CD8-positive, alpha-beta T cell (primary cell): ENCODE measurements at regions of chr2 and their contacts with region 1.

Region 1: DNA sequence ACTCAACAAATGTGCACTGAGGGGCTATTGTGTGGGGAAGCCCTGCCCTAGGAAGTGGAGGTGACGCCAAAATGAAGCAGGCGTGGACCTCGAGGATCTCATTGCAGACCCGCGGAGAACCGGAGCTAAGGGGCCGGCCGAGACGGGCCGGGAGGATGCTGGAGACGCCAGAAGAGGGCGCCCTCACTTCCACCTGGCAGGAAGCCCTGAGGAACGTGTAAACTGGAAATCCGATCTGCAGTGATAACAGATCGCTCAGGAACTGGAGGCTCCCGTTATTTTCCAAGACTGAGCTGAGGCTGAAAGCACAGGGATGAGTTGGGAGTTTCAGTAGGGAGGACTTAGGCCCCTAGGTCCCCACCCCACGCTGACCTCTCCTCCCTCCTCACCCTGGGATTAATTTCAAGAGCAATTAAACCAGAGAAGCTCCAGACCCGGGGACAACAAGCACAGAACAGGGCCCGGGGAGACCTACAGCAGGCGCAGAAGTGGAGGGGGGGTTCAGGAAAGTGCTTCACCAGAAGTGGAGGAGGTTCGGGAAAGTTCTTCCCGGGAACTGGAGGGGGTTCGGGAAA is 7.7 kb upstream of the COL6A3 start:
- DNase-seq: peak; percentile 56 to 91 (median 83)
- ATAC-seq: peak; percentile 88
- H3K4me3 ChIP-seq: peak overlapping the region in 1 of 2 experiments; percentile 21
- H3K4me3 Mint-ChIP-seq: peak overlapping the region; percentile 70
- H3K27ac ChIP-seq: no peak overlapping the region
- H3K27ac Mint-ChIP-seq: no peak overlapping the region
- H3K4me1 ChIP-seq: peaks cover 10% of the 10 kb centered on the region
- H3K4me1 Mint-ChIP-seq: peaks cover 34% of the 10 kb centered on the region
- H3K27me3 ChIP-seq: no peaks in the 10 kb centered on the region
- H3K27me3 Mint-ChIP-seq: no peaks in the 10 kb centered on the region
- CTCF ChIP-seq: peak; percentile 86

Region 2: DNA sequence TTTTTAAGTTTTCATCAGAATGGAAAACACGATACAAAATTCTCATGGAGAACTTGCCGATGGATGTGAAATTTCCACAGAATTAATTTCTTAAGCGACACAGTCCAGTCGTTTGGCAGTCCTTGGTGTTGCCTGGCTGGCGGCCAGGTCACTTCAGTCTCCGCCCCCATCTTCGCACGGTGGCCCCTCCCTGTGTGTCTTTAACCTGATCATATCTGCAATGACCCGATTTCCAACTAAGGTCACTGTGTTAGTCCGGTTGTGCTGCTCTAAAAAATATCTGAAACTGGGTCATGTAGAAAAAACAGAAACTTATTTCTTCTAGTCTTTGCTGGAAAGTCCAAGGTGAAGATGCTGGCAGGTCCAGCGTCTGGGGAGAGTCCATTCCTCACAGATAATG is 380.4 kb before region 1 on chr2:
- CTCF ChIA-PET with region 1: no interaction called
- POLR2A ChIA-PET with region 1: no interaction called
- intact Hi-C with region 1: no loop called
- DNase-seq: no peak
- ATAC-seq: no peak
- H3K4me3 ChIP-seq: no peak overlapping the region
- H3K4me3 Mint-ChIP-seq: no peak overlapping the region
- H3K27ac ChIP-seq: no peak overlapping the region
- H3K27ac Mint-ChIP-seq: no peak overlapping the region
- H3K4me1 ChIP-seq: no peaks in the 10 kb centered on the region
- H3K4me1 Mint-ChIP-seq: no peaks in the 10 kb centered on the region
- H3K27me3 ChIP-seq: no peaks in the 10 kb centered on the region
- H3K27me3 Mint-ChIP-seq: peaks cover 2% of the 10 kb centered on the region
- CTCF ChIP-seq: no peak

Region 3: DNA sequence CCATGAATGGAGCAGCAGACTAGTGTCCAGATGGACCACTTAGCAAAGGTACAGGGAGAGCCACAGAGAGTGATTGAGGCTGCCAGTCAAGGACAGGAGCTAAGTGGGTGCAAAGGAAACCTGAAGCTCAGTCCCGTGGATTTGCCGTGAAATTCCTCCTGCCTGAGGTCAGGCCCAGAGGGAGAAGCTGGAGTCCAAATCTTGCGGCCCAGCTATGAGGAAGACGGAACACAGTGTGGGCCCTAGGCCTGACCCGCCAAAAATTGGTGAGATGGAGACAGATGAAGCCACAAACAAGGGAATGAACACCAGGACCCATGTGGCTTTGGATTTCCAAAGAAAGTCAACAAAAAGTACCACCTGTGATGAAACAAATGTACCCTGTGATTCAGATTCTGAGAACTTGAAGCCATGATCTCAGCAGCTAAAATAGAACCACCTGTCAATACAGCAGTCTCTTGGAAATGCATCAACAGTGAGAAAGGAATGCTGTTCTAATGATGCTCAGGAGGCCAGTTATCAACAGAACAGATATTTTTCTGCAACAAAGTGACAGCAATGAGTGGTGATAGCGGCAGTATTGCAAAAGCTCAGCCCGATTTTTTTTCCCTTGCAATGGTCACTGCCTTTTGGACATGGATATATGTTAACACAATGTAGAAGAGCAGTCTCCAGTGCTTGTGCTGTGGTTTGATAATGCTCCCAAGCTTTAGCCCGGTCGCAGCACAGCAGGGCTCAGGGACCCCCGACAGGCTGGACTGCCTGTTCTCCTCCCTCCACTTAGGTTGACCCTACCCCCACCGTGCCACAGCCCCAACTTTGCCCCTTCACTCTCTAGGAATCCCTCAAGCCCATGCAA is 18.4 kb before region 1 on chr2:
- CTCF ChIA-PET with region 1: interaction called, 77 read pairs
- POLR2A ChIA-PET with region 1: no interaction called
- intact Hi-C with region 1: no loop called
- DNase-seq: no peak
- ATAC-seq: no peak
- H3K4me3 ChIP-seq: no peak overlapping the region
- H3K4me3 Mint-ChIP-seq: no peak overlapping the region
- H3K27ac ChIP-seq: no peak overlapping the region
- H3K27ac Mint-ChIP-seq: no peak overlapping the region
- H3K4me1 ChIP-seq: no peaks in the 10 kb centered on the region
- H3K4me1 Mint-ChIP-seq: no peaks in the 10 kb centered on the region
- H3K27me3 ChIP-seq: no peaks in the 10 kb centered on the region
- H3K27me3 Mint-ChIP-seq: no peaks in the 10 kb centered on the region
- CTCF ChIP-seq: no peak

Region 4: DNA sequence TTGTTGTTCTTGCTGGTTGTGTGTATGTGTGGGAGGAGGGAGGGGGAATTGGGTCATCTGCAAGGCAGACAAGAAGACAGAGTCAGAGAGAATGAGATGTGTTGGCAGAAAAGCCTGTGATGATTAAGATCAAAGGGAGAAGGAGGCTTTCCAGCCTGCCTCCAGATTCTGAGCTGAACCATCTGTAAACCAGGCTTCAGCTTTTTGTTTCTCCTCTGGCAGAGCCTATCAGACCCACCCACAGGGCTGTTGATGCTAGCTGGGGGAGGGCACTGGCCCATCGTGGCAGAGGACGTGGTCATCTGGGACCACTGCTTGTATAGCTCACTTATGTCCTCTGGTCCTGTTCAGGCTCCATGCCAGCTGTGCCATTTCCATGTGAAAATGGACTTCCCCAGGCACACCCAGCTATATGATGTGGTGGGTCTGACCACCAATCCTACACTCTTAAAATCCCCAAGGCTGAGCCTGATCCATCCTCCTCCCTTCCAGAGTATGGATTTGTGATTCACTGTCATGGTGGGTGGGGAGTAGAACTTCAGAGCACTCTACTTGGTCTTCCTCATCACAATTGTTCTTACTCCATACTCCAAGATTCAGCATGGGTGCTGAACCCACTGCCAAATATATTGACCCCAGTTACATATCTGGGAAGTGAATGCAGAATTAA is 20.1 kb after region 1 on chr2:
- CTCF ChIA-PET with region 1: interaction called, 136 read pairs
- POLR2A ChIA-PET with region 1: interaction called, 19 read pairs
- intact Hi-C with region 1: loop called in 1 of 2 experiments (anchors 2 kb)
- DNase-seq: peak in 4 of 9 experiments; percentile 25 to 69 (median 48)
- ATAC-seq: peak; percentile 90
- H3K4me3 ChIP-seq: no peak overlapping the region
- H3K4me3 Mint-ChIP-seq: peak overlapping the region; percentile 29
- H3K27ac ChIP-seq: no peak overlapping the region
- H3K27ac Mint-ChIP-seq: peak overlapping the region; percentile 74
- H3K4me1 ChIP-seq: peaks cover 51% of the 10 kb centered on the region
- H3K4me1 Mint-ChIP-seq: peaks cover 59% of the 10 kb centered on the region
- H3K27me3 ChIP-seq: no peaks in the 10 kb centered on the region
- H3K27me3 Mint-ChIP-seq: no peaks in the 10 kb centered on the region
- CTCF ChIP-seq: no peak

Region 5: DNA sequence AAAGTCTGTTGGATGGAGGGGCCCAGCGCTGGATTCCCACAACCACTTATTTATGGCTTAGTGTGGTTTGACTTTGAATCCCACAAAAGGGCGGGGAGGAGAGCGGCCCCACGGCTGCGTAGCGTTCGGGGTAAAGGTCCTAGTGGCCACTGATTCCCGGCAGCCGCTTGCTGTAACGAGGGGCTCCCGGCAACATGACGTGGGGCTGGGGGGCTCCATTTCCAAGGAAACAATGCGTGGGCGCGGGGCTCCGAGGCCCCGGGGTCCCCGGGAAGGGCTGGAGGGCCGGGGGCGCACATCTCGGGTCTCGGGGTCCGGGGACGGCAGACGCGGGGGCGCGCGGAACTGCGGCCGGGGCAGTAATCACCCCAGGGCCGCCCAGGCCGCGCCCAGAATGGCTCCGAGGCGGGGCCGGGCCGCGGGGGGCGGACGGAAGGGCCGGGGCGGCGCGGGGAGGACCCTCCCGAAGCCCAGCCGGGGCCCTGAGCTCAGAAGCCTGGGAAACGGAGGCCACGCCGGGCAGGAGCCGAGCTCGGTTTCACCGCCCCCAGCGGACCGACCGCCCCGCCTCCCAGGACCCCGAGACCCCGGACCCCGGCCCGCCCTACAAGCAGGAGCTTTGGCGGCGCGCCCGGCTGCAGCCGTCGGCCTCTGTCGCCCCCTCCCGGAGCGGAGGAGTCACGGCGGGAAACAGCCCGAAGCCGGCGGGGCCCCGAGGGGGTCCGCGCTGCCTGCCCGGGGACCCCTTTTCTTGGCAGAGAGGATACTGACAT is 53.5 kb after region 1 on chr2:
- CTCF ChIA-PET with region 1: interaction called, 230 read pairs
- POLR2A ChIA-PET with region 1: interaction called, 31 read pairs
- intact Hi-C with region 1: loop called (anchors 1 kb)
- DNase-seq: peak; percentile 60 to 91 (median 77)
- ATAC-seq: peak; percentile 86
- H3K4me3 ChIP-seq: peak overlapping the region; percentile 34 to 61
- H3K4me3 Mint-ChIP-seq: peak overlapping the region; percentile 84
- H3K27ac ChIP-seq: peak overlapping the region; percentile 39 to 52
- H3K27ac Mint-ChIP-seq: peak overlapping the region; percentile 86
- H3K4me1 ChIP-seq: peaks cover 16% of the 10 kb centered on the region
- H3K4me1 Mint-ChIP-seq: peaks cover 18% of the 10 kb centered on the region
- H3K27me3 ChIP-seq: peaks cover 0 to 4% of the 10 kb centered on the region in 2 experiments
- H3K27me3 Mint-ChIP-seq: peaks cover 22% of the 10 kb centered on the region
- CTCF ChIP-seq: peak; percentile 97

Region 6: GRCh38 chr2:237572021-237572741 is 150.6 kb after region 1 on chr2:
- CTCF ChIA-PET with region 1: interaction called, 10 read pairs
- POLR2A ChIA-PET with region 1: no interaction called
- intact Hi-C with region 1: loop called (anchors 2 to 5 kb)
- DNase-seq: peak; percentile 67 to 92 (median 85)
- ATAC-seq: peak; percentile 94
- H3K4me3 ChIP-seq: no peak overlapping the region
- H3K4me3 Mint-ChIP-seq: no peak overlapping the region
- H3K27ac ChIP-seq: no peak overlapping the region
- H3K27ac Mint-ChIP-seq: no peak overlapping the region
- H3K4me1 ChIP-seq: no peaks in the 10 kb centered on the region
- H3K4me1 Mint-ChIP-seq: peaks cover 3% of the 10 kb centered on the region
- H3K27me3 ChIP-seq: no peaks in the 10 kb centered on the region
- H3K27me3 Mint-ChIP-seq: peaks cover 11% of the 10 kb centered on the region
- CTCF ChIP-seq: peak; percentile 91

Region 7: GRCh38 chr2:237955640-237956401 is 534.2 kb after region 1 on chr2:
- CTCF ChIA-PET with region 1: no interaction called
- POLR2A ChIA-PET with region 1: no interaction called
- intact Hi-C with region 1: no loop called
- DNase-seq: peak in 2 of 9 experiments; percentile 28 to 45
- ATAC-seq: peak; percentile 40
- H3K4me3 ChIP-seq: peak overlapping the region in 1 of 2 experiments; percentile 24
- H3K4me3 Mint-ChIP-seq: no peak overlapping the region
- H3K27ac ChIP-seq: no peak overlapping the region
- H3K27ac Mint-ChIP-seq: no peak overlapping the region
- H3K4me1 ChIP-seq: peaks cover 7% of the 10 kb centered on the region
- H3K4me1 Mint-ChIP-seq: peaks cover 11% of the 10 kb centered on the region
- H3K27me3 ChIP-seq: peaks cover 0 to 8% of the 10 kb centered on the region in 2 experiments
- H3K27me3 Mint-ChIP-seq: peaks cover 22% of the 10 kb centered on the region
- CTCF ChIP-seq: no peak